ENCODE measurements at regions of chr6 and their contacts with region 1.

Region 1: GRCh38 chr6:35601331-35602132 is 87.2 kb downstream of the FKBP5 start:
- DNase-seq: peak; percentile 76
- H3K4me3 Mint-ChIP-seq: peak overlapping the region; percentile 54
- H3K27ac Mint-ChIP-seq: peak overlapping the region; percentile 80
- H3K4me1 Mint-ChIP-seq: peaks cover 73% of the 10 kb centered on the region
- H3K27me3 Mint-ChIP-seq: no peaks in the 10 kb centered on the region

Region 2: DNA sequence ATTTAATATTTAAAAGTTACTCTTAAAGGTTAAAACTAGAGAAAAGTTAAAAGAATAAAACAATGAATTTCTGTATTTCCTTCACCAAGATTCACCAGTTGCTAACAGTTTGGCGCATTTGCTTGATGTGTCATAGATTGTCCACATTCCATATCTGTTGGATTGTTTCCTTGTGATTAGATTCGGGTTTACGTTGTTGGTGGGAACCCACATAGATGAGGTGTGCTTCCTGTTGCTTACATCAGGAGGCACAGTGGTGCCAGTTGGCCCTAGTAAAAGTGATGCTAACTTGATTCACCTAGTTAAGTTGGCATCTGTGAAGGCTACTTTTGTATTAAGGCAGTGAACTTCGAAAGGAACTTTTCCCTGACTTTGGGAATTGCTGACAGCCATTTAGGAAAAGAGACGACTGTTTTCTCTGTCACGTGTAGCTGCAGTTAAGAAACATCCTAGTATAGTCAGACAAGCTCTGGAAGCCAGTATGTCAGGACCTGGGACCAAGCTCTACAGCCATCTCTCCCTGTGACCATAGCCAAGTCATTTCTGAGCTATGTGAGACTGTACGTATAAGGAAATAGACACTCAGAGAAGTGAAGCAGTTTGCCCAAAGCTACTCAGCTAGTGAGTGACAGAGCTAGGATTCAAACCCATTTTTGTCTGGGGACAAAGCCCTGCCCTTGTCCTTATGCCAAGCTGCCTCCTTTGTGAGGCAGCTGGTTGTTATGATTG is 210.1 kb before region 1 on chr6:
- CTCF ChIA-PET with region 1: no interaction called
- POLR2A ChIA-PET with region 1: no interaction called
- intact Hi-C with region 1: no loop called
- DNase-seq: peak; percentile 28
- H3K4me3 Mint-ChIP-seq: no peak overlapping the region
- H3K27ac Mint-ChIP-seq: peak overlapping the region; percentile 55
- H3K4me1 Mint-ChIP-seq: peaks cover 51% of the 10 kb centered on the region
- H3K27me3 Mint-ChIP-seq: no peaks in the 10 kb centered on the region

Region 3: GRCh38 chr6:35500782-35501181 is 100.8 kb before region 1 on chr6:
- CTCF ChIA-PET with region 1: no interaction called
- POLR2A ChIA-PET with region 1: no interaction called
- intact Hi-C with region 1: no loop called
- DNase-seq: no peak
- H3K4me3 Mint-ChIP-seq: no peak overlapping the region
- H3K27ac Mint-ChIP-seq: no peak overlapping the region
- H3K4me1 Mint-ChIP-seq: peaks cover 7% of the 10 kb centered on the region
- H3K27me3 Mint-ChIP-seq: peaks cover 11% of the 10 kb centered on the region

Region 4: DNA sequence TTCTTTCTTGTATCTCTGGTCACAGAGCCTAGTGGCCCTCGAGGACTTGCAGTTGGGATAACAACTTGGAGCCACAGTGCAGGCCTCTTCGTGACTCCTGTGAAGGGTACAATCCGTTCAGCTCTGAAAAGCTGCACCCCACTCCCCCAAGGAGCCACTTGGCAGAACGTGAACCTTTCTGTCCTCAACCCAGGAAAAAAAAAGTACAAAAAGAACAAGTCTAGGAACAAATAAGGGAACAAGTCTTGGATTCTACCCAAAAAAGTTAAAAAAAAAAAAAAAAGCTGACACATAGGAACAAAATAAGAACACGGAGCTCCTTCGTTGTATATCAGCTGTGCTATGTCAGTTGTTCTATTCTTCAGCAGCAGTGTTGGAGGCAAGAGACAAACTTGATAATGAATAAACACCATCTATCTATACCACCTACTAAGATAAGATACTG is 10.9 kb before region 1 on chr6:
- CTCF ChIA-PET with region 1: interaction called, 15 read pairs
- POLR2A ChIA-PET with region 1: interaction called, 3 read pairs
- intact Hi-C with region 1: no loop called
- DNase-seq: no peak
- H3K4me3 Mint-ChIP-seq: no peak overlapping the region
- H3K27ac Mint-ChIP-seq: no peak overlapping the region
- H3K4me1 Mint-ChIP-seq: peaks cover 73% of the 10 kb centered on the region
- H3K27me3 Mint-ChIP-seq: no peaks in the 10 kb centered on the region

Region 5: DNA sequence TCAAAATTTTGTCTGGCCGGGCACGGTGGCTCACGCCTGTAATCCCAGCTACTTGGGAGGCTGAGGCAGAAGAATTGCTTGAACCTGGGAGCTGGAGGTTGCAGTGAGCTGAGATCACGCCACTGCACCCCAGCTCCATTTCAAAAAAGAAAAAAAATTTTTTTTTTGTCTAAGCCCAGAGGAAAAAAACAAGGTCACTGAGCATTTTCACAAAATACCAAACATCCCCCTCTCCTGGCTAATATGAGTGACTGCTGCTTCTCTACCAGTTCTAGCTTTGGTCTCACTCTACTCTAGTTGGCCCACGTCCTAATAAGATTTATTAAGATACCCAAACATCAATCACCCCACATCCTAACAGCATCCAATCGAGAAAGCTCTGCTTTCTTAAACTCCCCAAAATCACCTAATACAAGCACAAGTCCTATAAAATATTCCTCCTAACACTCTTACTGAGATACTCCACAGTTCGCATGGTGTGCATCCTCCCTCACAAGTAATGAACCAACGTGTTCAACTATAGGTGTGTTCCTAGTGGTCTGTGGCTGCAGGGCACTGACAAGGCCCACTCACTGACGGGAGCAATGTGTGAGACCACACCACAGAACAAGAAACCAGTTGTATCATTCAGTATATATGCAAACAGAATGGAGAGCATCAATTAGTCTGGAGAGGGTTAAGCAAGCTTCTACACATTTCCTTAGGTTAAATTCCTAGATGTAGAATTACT is 23.0 kb after region 1 on chr6:
- CTCF ChIA-PET with region 1: interaction called, 21 read pairs
- POLR2A ChIA-PET with region 1: interaction called, 3 read pairs
- intact Hi-C with region 1: no loop called
- DNase-seq: no peak
- H3K4me3 Mint-ChIP-seq: no peak overlapping the region
- H3K27ac Mint-ChIP-seq: peak overlapping the region; percentile 43
- H3K4me1 Mint-ChIP-seq: peaks cover 25% of the 10 kb centered on the region
- H3K27me3 Mint-ChIP-seq: no peaks in the 10 kb centered on the region

Region 6: DNA sequence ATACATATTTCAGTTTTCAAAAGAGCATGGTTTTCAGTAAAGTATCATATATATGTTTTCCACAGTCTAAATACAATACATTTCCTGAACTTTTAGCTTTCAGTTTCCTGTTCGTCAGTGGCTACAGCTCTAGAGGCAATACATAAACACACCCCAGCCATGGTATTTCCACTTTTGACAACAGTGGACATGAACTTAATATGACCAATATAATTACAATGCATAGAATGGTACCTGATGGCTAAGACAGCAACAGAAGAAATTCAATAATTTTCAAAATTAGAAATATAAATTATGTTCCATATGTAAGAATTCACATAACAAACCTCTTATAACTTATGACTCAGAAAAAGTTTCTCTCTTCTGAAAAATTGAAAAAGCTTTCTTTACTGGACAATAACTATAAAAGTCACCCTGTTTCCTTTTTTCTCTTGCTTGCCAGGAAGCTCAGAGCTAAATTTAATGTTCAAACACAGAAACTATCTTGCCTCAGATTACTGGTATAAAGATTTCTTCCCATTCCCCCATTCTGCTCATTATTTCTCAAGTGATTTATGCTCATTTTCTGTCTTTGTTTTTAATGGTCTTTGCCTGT is 68.0 kb after region 1 on chr6:
- CTCF ChIA-PET with region 1: interaction called, 3 read pairs
- POLR2A ChIA-PET with region 1: no interaction called
- intact Hi-C with region 1: loop called (anchors 5 kb)
- DNase-seq: no peak
- H3K4me3 Mint-ChIP-seq: peak overlapping the region; percentile 43
- H3K27ac Mint-ChIP-seq: peak overlapping the region; percentile 92
- H3K4me1 Mint-ChIP-seq: peaks cover 49% of the 10 kb centered on the region
- H3K27me3 Mint-ChIP-seq: no peaks in the 10 kb centered on the region

Measured in activated CD4-positive, alpha-beta memory T cell treated with anti-CD3 and anti-CD28 coated beads for 36 hours (primary cell).